ENCODE measurements at regions of chr2 and their contacts with region 1.

Region 1: GRCh38 chr2:204691911-204692510 is 146.7 kb downstream of the PARD3B start:
- DNase-seq: peak; percentile 57
- H3K4me3 ChIP-seq: no peak overlapping the region
- H3K27ac ChIP-seq: no peak overlapping the region
- H3K4me1 ChIP-seq: no peaks in the 10 kb centered on the region
- H3K27me3 ChIP-seq: no peaks in the 10 kb centered on the region
- CTCF ChIP-seq: peak; percentile 84 to 85

Region 2: GRCh38 chr2:204145263-204145751 is 546.7 kb before region 1 on chr2:
- CTCF ChIA-PET with region 1: interaction called, 4 read pairs
- dilution Hi-C with region 1: no loop called
- in situ Hi-C with region 1: no loop called
- intact Hi-C with region 1: loop called (anchors 1 kb)
- DNase-seq: peak; percentile 59
- H3K4me3 ChIP-seq: peak overlapping the region; percentile 22 to 39 (median 28)
- H3K27ac ChIP-seq: no peak overlapping the region
- H3K4me1 ChIP-seq: no peaks in the 10 kb centered on the region
- H3K27me3 ChIP-seq: peaks cover 2% of the 10 kb centered on the region
- CTCF ChIP-seq: peak; percentile 91 to 95

Region 3: DNA sequence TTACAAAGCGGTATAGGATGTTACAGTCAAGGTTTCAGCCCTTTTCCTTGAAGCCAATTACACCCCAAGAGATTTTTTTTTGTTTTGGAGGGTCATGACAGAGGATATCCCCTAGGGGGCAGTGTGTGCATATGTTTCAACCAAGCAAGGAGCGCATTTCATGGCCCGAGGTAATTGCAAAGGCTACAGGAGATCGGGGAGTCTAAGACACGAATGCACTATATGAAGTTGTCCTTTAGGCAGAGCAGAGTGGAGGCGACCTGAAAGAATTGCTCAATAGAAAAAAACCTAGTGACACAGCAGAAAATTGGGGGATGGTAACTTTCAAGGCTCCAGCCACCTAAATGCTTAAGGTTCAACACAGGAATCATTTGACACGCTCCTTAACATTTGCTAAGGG is 366.5 kb before region 1 on chr2:
- CTCF ChIA-PET with region 1: interaction called, 6 read pairs
- dilution Hi-C with region 1: no loop called
- in situ Hi-C with region 1: loop called (anchors 5 to 25 kb)
- intact Hi-C with region 1: loop called (anchors 1 kb)
- DNase-seq: peak; percentile 59
- H3K4me3 ChIP-seq: no peak overlapping the region
- H3K27ac ChIP-seq: no peak overlapping the region
- H3K4me1 ChIP-seq: no peaks in the 10 kb centered on the region
- H3K27me3 ChIP-seq: no peaks in the 10 kb centered on the region
- CTCF ChIP-seq: peak; percentile 78 to 80

Region 4: DNA sequence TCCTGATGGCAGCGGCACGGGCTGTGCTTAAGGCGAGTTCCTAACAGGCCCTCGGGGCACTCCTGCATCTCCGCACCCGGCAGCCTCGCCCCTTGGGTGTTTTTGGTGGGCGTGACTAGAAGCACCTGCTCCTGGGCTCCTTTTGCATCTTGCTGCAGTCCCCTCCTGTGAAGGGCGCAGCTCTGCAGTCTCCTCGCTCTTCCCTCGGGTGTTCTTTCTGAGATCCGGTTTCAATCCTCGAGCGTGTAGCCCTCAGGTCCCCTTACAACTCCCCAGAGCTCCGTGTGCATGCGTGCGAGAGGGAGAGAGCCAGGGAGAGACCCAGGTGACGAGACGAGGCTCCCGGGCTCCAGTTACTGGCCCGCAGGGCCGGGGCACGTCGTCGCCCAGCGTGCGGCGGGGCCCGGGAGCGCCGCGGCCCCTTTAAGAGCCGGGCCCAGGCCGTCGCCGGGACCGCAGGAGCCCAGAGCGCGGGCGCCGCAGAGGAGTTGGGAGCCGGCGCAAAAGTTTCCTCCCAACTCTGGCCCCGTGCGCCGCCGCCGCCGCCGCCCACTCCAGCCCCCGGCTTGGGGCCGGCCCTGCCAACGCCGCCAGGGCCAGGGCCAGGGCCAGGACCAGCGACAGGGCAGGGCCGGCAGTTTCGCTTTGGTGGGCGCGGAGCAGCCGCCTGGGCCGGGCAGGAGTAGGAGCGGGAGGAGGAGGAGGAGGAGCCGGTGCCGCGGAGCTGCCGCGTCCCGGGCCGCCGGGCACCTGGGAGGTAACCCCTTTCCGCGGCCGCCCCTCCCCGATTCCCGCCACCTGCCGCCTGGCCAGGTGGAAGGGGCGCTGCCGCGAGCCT is 146.8 kb before region 1 on chr2 and contains the start of gene PARD3B:
- CTCF ChIA-PET with region 1: no interaction called
- dilution Hi-C with region 1: no loop called
- in situ Hi-C with region 1: no loop called
- intact Hi-C with region 1: loop called (anchors 5 kb)
- DNase-seq: peak; percentile 57
- H3K4me3 ChIP-seq: peak within 1 kb of the TSS; percentile 52 to 69 (median 59)
- H3K27ac ChIP-seq: no peak within 1 kb of the TSS
- H3K4me1 ChIP-seq: peaks cover 14% of the 10 kb centered on the region
- H3K27me3 ChIP-seq: no peaks in the 10 kb centered on the region
- CTCF ChIP-seq: no peak
- total RNA-seq, gene PARD3B: 4.1 to 6.5 TPM

Region 5: GRCh38 chr2:205947621-205948495 is 1255.8 kb after region 1 on chr2:
- CTCF ChIA-PET with region 1: no interaction called
- dilution Hi-C with region 1: no loop called
- in situ Hi-C with region 1: no loop called
- intact Hi-C with region 1: loop called (anchors 5 kb)
- DNase-seq: peak; percentile 35
- H3K4me3 ChIP-seq: no peak overlapping the region
- H3K27ac ChIP-seq: no peak overlapping the region
- H3K4me1 ChIP-seq: no peaks in the 10 kb centered on the region
- H3K27me3 ChIP-seq: no peaks in the 10 kb centered on the region
- CTCF ChIP-seq: peak; percentile 92